CD4-positive, alpha-beta memory T cell (primary cell): ENCODE measurements at regions of chr19 and their contacts with region 1.

Region 1: GRCh38 chr19:54390942-54391577 is 24.2 kb upstream of the TTYH1 start:
- DNase-seq: peak; percentile 68 to 69 (median 69)
- H3K4me3 ChIP-seq: no peak overlapping the region
- H3K4me3 Mint-ChIP-seq: peak overlapping the region; percentile 18 to 85 (median 70)
- H3K27ac ChIP-seq: no peak overlapping the region
- H3K27ac Mint-ChIP-seq: peak overlapping the region; percentile 64 to 94 (median 82)
- H3K4me1 ChIP-seq: peaks cover 38% of the 10 kb centered on the region
- H3K4me1 Mint-ChIP-seq: peaks cover 26 to 41% (median 33%) of the 10 kb centered on the region in 4 donors
- H3K27me3 ChIP-seq: no peaks in the 10 kb centered on the region
- H3K27me3 Mint-ChIP-seq: peaks cover 5 to 11% of the 10 kb centered on the region in 2 donors

Region 2: DNA sequence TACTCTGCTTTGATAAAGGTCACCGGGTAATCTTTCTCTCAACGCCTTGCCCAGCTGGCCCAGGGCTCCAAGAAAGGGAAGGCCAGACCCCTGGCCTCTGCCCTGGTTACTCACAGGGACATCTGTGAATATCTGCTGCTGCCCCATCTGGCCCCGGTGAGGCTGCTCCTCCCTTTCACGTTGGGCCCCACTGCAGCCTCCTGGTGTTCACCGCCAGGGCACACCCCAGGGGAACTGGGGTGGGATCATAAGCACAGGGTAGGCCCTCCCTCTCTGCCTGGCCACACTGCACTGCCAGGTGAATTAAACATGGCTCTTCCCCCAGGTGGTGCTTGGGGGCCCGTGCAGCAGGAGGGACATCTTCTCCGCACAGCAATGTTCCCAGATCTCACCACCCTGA is 39.0 kb before region 1 on chr19:
- CTCF ChIA-PET with region 1: interaction called, 90 read pairs
- POLR2A ChIA-PET with region 1: interaction called, 15 read pairs
- intact Hi-C with region 1: no loop called
- DNase-seq: no peak
- H3K4me3 ChIP-seq: no peak overlapping the region
- H3K4me3 Mint-ChIP-seq: no peak overlapping the region
- H3K27ac ChIP-seq: no peak overlapping the region
- H3K27ac Mint-ChIP-seq: peak overlapping the region in 1 of 7 donors; percentile 29
- H3K4me1 ChIP-seq: no peaks in the 10 kb centered on the region
- H3K4me1 Mint-ChIP-seq: peaks cover 1 to 9% (median 5%) of the 10 kb centered on the region in 4 donors
- H3K27me3 ChIP-seq: no peaks in the 10 kb centered on the region
- H3K27me3 Mint-ChIP-seq: peaks cover 3 to 5% of the 10 kb centered on the region in 2 donors

Region 3: GRCh38 chr19:54364775-54365257 is 26.2 kb before region 1 on chr19 and contains the start of gene LAIR1:
- CTCF ChIA-PET with region 1: interaction called, 28 read pairs
- POLR2A ChIA-PET with region 1: interaction called, 63 read pairs
- intact Hi-C with region 1: loop called (anchors 1 kb)
- DNase-seq: peak in 4 of 5 donors; percentile 38 to 55 (median 39)
- H3K4me3 ChIP-seq: peak within 1 kb of the TSS; percentile 36 to 55
- H3K4me3 Mint-ChIP-seq: peak within 1 kb of the TSS; percentile 83 to 91 (median 89)
- H3K27ac ChIP-seq: peak within 1 kb of the TSS; percentile 42
- H3K27ac Mint-ChIP-seq: peak within 1 kb of the TSS; percentile 86 to 94 (median 91)
- H3K4me1 ChIP-seq: peaks cover 76% of the 10 kb centered on the region
- H3K4me1 Mint-ChIP-seq: peaks cover 48 to 87% (median 69%) of the 10 kb centered on the region in 4 donors
- H3K27me3 ChIP-seq: no peaks in the 10 kb centered on the region
- H3K27me3 Mint-ChIP-seq: no peaks in the 10 kb centered on the region
- total RNA-seq, gene LAIR1: 57.6 to 59.8 TPM

Region 4: DNA sequence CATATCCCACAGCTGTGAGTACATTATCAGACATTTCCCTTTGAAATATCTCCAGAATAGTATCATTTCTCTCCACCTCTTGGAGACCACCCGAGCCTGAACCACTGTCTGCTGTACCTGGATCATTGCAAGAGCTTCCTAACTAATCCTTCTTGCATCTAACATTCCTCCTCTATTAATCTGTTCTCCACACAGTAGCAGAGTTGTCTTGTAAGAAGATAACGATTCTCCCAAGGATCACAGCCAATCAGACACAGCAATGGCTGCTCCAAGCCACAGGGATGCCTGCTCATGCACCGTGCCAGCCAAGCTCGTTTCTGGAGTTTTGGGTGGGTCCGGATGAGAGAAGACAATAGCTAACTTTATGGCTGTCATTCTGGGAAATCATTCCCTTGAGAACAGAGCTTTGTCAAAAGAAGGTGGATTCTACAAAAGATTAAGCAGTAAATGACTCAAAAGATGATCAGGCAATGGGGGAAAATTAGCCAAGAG is 11.8 kb before region 1 on chr19:
- CTCF ChIA-PET with region 1: interaction called, 16 read pairs
- POLR2A ChIA-PET with region 1: interaction called, 74 read pairs
- intact Hi-C with region 1: loop called (anchors 1 kb)
- DNase-seq: no peak
- H3K4me3 ChIP-seq: no peak overlapping the region
- H3K4me3 Mint-ChIP-seq: peak overlapping the region in 7 of 8 donors; percentile 4 to 71 (median 42)
- H3K27ac ChIP-seq: no peak overlapping the region
- H3K27ac Mint-ChIP-seq: peak overlapping the region in 4 of 7 donors; percentile 29 to 66 (median 42)
- H3K4me1 ChIP-seq: peaks cover 56% of the 10 kb centered on the region
- H3K4me1 Mint-ChIP-seq: peaks cover 42 to 67% (median 59%) of the 10 kb centered on the region in 4 donors
- H3K27me3 ChIP-seq: no peaks in the 10 kb centered on the region
- H3K27me3 Mint-ChIP-seq: no peaks in the 10 kb centered on the region

Region 5: GRCh38 chr19:54418030-54418929 is 27.2 kb after region 1 on chr19:
- CTCF ChIA-PET with region 1: no interaction called
- POLR2A ChIA-PET with region 1: no interaction called
- intact Hi-C with region 1: no loop called
- DNase-seq: peak in 2 of 5 donors; percentile 17 to 18
- H3K4me3 ChIP-seq: no peak overlapping the region
- H3K4me3 Mint-ChIP-seq: peak overlapping the region; percentile 17 to 77 (median 56)
- H3K27ac ChIP-seq: no peak overlapping the region
- H3K27ac Mint-ChIP-seq: peak overlapping the region in 3 of 7 donors; percentile 8 to 53 (median 38)
- H3K4me1 ChIP-seq: peaks cover 12% of the 10 kb centered on the region
- H3K4me1 Mint-ChIP-seq: peaks cover 10 to 21% (median 14%) of the 10 kb centered on the region in 4 donors
- H3K27me3 ChIP-seq: peaks cover 19% of the 10 kb centered on the region
- H3K27me3 Mint-ChIP-seq: peaks cover 35 to 38% of the 10 kb centered on the region in 2 donors

Region 6: GRCh38 chr19:54448774-54449700 is 58.0 kb after region 1 on chr19 and contains the start of gene LENG8:
- CTCF ChIA-PET with region 1: no interaction called
- POLR2A ChIA-PET with region 1: interaction called, 13 read pairs
- intact Hi-C with region 1: no loop called
- DNase-seq: peak; percentile 98 to 99 (median 99)
- H3K4me3 ChIP-seq: peak within 1 kb of the TSS; percentile 75 to 98
- H3K4me3 Mint-ChIP-seq: peak within 1 kb of the TSS; percentile 91 to 100 (median 98)
- H3K27ac ChIP-seq: peak within 1 kb of the TSS; percentile 93
- H3K27ac Mint-ChIP-seq: peak within 1 kb of the TSS; percentile 96 to 100 (median 99)
- H3K4me1 ChIP-seq: peaks cover 46% of the 10 kb centered on the region
- H3K4me1 Mint-ChIP-seq: peaks cover 25 to 69% (median 41%) of the 10 kb centered on the region in 4 donors
- H3K27me3 ChIP-seq: no peaks in the 10 kb centered on the region
- H3K27me3 Mint-ChIP-seq: peaks cover 0 to 3% of the 10 kb centered on the region in 2 donors
- total RNA-seq, gene LENG8: 535 to 565 TPM

Region 7: GRCh38 chr19:54594737-54595136 is 203.7 kb after region 1 on chr19:
- CTCF ChIA-PET with region 1: no interaction called
- POLR2A ChIA-PET with region 1: no interaction called
- intact Hi-C with region 1: no loop called
- DNase-seq: no peak
- H3K4me3 ChIP-seq: no peak overlapping the region
- H3K4me3 Mint-ChIP-seq: no peak overlapping the region
- H3K27ac ChIP-seq: no peak overlapping the region
- H3K27ac Mint-ChIP-seq: no peak overlapping the region
- H3K4me1 ChIP-seq: no peaks in the 10 kb centered on the region
- H3K4me1 Mint-ChIP-seq: no peaks in the 10 kb centered on the region
- H3K27me3 ChIP-seq: no peaks in the 10 kb centered on the region
- H3K27me3 Mint-ChIP-seq: peaks cover 15 to 24% of the 10 kb centered on the region in 2 donors